Head of caudate nucleus (tissue), 42 donors: ENCODE measurements at regions of chr5 and their contacts with region 1.

Region 1: DNA sequence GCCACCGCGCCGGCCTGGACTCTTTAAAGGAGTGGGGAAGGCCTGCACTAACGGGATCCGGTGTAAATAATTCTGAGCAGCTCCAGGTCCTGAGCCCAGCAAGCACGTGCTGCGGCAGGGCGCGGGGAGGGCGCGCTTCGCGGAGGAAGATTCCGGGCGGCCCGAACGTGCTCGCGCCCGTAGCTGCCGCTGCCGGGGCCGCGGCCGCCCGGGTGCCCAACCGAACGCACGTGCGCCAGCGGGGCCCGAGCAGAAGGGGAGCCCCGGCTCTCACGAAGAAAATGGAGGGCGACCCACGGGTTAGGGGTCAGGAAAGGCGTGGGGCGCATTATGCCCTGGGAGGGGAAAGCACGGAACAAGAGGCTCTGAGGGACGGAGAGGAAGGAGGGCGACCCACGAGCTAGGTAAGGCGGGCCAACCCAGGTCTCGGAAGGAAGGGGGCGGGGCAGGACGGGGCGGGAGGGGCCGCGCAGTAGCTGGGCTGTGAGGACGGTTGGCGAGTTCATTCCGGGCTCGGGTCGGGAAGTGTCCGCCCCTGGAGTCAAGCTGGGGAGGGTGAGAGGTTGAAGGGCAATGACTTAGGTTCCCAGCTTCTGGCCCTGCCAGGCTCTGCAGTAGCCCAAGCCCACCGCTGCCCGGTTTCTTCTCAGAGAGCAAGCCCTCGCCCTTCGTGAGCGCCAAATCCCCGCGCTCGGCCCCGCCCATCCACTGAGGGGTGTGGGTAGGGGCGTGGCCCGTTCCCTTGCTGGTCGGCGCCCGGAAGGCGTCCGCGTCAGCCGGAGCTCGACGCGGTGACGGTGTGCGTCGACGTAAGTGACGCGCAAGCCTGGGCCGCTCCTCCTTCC is at the start of gene ZNF131:
- DNase-seq: peak; percentile 88 to 98 (median 97)

Region 2: GRCh38 chr5:42591015-42591414 is 529.9 kb before region 1 on chr5:
- intact Hi-C with region 1: no loop called
- DNase-seq: peak in 18 of 42 donors; percentile 8 to 59 (median 24)

Region 3: GRCh38 chr5:43066799-43067741 is 53.9 kb before region 1 on chr5:
- intact Hi-C with region 1: loop called (anchors 10 kb)
- DNase-seq: peak; percentile 75 to 96 (median 90)

Region 4: DNA sequence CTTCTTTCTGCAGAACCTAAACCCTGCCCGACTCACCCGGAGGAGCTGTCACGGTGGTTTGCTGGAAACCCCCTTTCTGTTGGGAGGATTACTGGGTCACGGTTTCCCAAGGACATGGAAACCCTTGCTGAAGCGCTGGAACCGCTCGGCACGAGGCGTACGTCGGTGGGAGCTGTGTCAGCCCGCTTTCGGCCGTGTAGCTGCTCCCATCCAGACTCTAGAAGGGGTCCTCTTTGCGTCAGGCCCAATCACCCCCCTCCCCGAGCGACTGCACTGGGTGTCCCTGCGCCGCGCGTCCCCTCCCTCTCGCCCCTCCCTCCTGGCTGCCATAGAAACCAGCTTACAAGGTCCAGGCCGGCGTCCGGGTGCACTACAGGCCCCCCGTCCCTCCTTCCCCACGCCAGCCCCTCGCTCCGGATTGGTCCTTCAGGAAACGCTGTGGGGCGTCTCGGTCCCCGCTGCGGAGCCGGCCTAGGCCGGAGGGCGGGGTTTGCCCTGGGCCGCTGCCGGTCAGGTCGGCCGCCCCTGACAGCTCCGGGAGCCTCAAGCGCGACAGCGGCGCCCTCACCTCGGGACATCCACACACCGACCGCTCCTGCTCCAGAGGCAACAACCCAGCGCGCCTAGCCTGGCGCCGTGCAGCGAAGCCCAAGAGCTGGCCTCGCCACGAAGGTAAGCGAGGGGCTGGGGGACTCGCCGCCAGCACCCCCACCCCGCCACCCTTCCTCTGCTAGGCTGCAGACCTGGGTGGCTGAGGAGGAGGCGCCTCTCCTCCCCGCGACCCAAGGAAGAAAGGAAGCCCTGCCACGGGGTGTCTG is 71.0 kb after region 1 on chr5 and contains the start of gene NIM1K:
- intact Hi-C with region 1: loop called (anchors 1 kb)
- DNase-seq: peak; percentile 82 to 97 (median 92)

Region 5: GRCh38 chr5:43313035-43313853 is 192.3 kb after region 1 on chr5 and contains the start of gene HMGCS1:
- intact Hi-C with region 1: loop called (anchors 2 kb)
- DNase-seq: peak; percentile 96 to 100 (median 99)